H1 (cell line): ENCODE measurements at regions of chr5 and their contacts with region 1.

Region 1: GRCh38 chr5:138594305-138595058 is 19.3 kb upstream of the HSPA9 start:
- DNase-seq: no peak
- H3K4me3 ChIP-seq: no peak overlapping the region
- H3K27ac ChIP-seq: no peak overlapping the region
- H3K4me1 ChIP-seq: no peaks in the 10 kb centered on the region
- H3K27me3 ChIP-seq: no peaks in the 10 kb centered on the region
- CTCF ChIP-seq: peak in 2 of 3 experiments; percentile 29 to 56; a peak in 2 of 4 replicates
- EP300 ChIP-seq: no peak
- POLR2A ChIP-seq: no peak
- RAD21 ChIP-seq: peak; percentile 8 to 19; a peak in 1 of 4 replicates

Region 2: DNA sequence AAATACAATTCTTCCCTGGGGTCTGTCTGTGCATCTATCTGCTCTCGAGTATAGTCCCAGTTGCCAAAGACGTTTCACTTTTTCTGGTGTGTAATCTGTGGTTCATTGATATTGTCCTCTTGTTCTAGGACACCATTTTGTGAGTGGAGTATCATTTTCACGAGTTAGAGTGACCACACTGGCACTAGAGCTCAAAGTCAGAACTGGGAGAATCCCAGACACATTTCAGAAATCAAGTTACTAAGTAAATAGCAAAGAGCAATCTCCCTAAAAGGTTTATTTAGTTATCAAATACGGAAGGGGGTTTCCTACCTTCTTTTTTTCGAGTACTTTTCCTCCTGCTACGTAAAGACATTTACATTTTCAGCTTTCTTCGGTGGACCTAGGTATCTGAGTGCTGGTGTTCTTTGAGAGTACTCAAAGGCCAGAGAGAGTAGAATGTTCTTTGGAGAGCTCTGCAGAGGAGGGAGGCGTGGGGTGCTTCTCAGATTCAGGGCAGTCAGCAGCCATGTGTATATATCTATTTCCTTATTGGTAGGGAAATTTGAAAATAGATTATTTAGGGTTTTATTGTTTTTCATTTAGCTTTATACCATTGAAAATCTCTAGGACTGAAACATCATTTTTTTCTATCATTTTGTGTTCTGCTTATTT is 10.4 kb before region 1 on chr5:
- CTCF ChIA-PET with region 1: interaction called, 40 read pairs
- POLR2A ChIA-PET with region 1: interaction called, 3 read pairs
- DNase-seq: no peak
- H3K4me3 ChIP-seq: no peak overlapping the region
- H3K27ac ChIP-seq: no peak overlapping the region
- H3K4me1 ChIP-seq: no peaks in the 10 kb centered on the region
- H3K27me3 ChIP-seq: no peaks in the 10 kb centered on the region
- CTCF ChIP-seq: no peak
- EP300 ChIP-seq: no peak
- POLR2A ChIP-seq: no peak
- RAD21 ChIP-seq: no peak

Region 3: DNA sequence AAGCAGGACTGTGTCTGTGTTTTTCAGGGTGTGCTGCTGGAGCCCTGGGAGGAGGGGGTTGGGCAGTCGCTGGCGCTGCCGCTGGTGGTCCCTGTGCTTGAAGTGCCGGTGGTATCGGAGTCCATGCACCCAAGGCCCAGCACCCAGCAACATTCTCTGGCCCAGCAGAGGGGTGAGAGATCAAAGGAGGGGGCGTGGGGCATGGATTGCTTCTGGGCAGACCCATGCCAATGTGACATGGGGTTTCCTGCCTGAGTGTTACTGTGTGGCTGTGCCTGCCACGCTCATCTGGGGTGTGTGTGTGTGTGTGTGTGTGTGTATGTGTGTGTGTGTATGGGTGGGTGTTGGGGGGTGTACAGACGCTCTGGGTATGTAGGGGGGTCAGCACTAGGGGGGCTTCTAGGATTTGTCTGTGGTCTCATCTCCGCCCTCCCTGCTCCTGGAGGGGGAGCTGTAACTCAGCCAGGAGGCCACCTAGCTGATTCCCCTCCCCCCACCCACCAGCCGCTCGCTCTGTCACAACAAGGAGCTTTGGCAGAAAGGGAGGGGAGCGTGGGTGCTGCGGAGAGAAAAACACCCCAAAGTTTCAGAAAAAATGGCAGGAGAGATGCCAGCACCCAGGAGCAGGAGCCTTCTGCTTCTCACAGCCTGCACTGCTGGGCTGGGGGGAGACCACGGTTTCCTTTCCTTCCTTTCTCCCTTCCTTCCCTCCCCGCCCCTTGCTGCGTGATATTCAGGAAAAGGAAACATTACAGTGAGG is 16.6 kb after region 1 on chr5:
- CTCF ChIA-PET with region 1: interaction called, 60 read pairs
- POLR2A ChIA-PET with region 1: interaction called, 4 read pairs
- DNase-seq: peak in 1 of 2 experiments; percentile 72
- H3K4me3 ChIP-seq: peak overlapping the region; percentile 33 to 69 (median 64)
- H3K27ac ChIP-seq: peak overlapping the region; percentile 56
- H3K4me1 ChIP-seq: peaks cover 3 to 21% (median 16%) of the 10 kb centered on the region in 4 experiments
- H3K27me3 ChIP-seq: no peaks in the 10 kb centered on the region
- CTCF ChIP-seq: peak; percentile 36 to 52 (median 41)
- EP300 ChIP-seq: peak in 1 of 2 experiments; percentile 27; a peak in 1 of 3 replicates
- POLR2A ChIP-seq: no peak
- RAD21 ChIP-seq: peak; percentile 35 to 53; a peak in 3 of 4 replicates

Region 4: GRCh38 chr5:138649316-138649720 is 54.8 kb after region 1 on chr5:
- CTCF ChIA-PET with region 1: interaction called, 10 read pairs
- POLR2A ChIA-PET with region 1: no interaction called
- DNase-seq: no peak
- H3K4me3 ChIP-seq: peak overlapping the region in 1 of 4 experiments; percentile 0; a peak in 1 of 8 replicates
- H3K27ac ChIP-seq: no peak overlapping the region
- H3K4me1 ChIP-seq: peaks cover 4 to 22% (median 11%) of the 10 kb centered on the region in 4 experiments
- H3K27me3 ChIP-seq: no peaks in the 10 kb centered on the region
- CTCF ChIP-seq: no peak
- EP300 ChIP-seq: no peak
- POLR2A ChIP-seq: no peak
- RAD21 ChIP-seq: no peak